ENCODE measurements at regions of chr6 and their contacts with region 1.

Region 1: DNA sequence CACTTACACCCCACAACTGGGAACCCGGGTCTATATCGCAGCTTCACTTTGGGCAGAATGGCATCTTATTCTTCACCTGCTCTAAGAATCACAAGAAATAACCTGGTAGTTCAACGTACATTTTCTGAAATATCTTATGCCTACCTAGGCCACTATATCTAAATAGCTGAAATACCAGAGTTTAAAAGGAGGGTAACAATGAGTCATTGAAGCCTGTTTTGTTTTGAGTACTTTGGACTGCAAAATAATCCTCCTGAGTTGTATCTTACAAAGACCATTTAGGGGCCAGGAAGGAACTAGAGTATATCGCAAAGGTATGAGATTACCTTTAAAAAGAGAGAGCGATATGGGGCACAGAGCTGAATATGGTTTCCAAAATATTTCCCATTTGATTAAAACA is 96.7 kb upstream of the NUP153 start:
- DNase-seq: no peak
- H3K4me3 ChIP-seq: no peak overlapping the region
- H3K27ac ChIP-seq: no peak overlapping the region
- H3K4me1 ChIP-seq: no peaks in the 10 kb centered on the region
- H3K27me3 ChIP-seq: no peaks in the 10 kb centered on the region
- CTCF ChIP-seq: no peak

Region 2: DNA sequence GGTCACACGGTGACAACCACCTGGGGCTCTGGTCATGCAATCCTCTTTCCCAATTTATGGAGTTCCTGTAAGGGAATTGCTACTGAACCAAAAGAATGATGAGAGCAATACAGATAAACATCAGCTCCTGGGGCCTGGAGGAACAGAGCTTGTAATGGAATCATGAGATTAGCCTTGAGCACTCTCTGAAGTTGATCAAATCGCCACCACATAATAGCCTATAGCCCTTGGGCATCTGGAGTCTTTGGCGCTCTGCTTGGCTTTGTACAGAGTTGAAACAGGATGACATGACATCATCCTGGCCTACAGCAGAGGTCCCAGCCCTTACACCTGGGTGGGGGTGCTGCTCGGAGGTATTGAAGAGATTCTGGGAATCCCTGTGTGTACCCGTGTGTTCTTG is 1986.3 kb before region 1 on chr6:
- CTCF ChIA-PET with region 1: no interaction called
- POLR2A ChIA-PET with region 1: no interaction called
- intact Hi-C with region 1: no loop called
- DNase-seq: no peak
- H3K4me3 ChIP-seq: no peak overlapping the region
- H3K27ac ChIP-seq: no peak overlapping the region
- H3K4me1 ChIP-seq: no peaks in the 10 kb centered on the region
- H3K27me3 ChIP-seq: no peaks in the 10 kb centered on the region
- CTCF ChIP-seq: no peak

Region 3: GRCh38 chr6:17145162-17145561 is 658.2 kb before region 1 on chr6:
- CTCF ChIA-PET with region 1: no interaction called
- POLR2A ChIA-PET with region 1: no interaction called
- intact Hi-C with region 1: no loop called
- DNase-seq: no peak
- H3K4me3 ChIP-seq: no peak overlapping the region
- H3K27ac ChIP-seq: no peak overlapping the region
- H3K4me1 ChIP-seq: no peaks in the 10 kb centered on the region
- H3K27me3 ChIP-seq: no peaks in the 10 kb centered on the region
- CTCF ChIP-seq: no peak

Region 4: GRCh38 chr6:17599885-17600526 is 203.4 kb before region 1 on chr6 and contains the start of gene FAM8A1:
- CTCF ChIA-PET with region 1: no interaction called
- POLR2A ChIA-PET with region 1: no interaction called
- intact Hi-C with region 1: loop called (anchors 5 kb)
- DNase-seq: peak; percentile 96
- H3K4me3 ChIP-seq: peak within 1 kb of the TSS; percentile 90
- H3K27ac ChIP-seq: peak within 1 kb of the TSS; percentile 88
- H3K4me1 ChIP-seq: peaks cover 14% of the 10 kb centered on the region
- H3K27me3 ChIP-seq: no peaks in the 10 kb centered on the region
- CTCF ChIP-seq: peak; percentile 45
- total RNA-seq, gene FAM8A1: 15.7 and 16.2 TPM in 2 replicates

Region 5: GRCh38 chr6:17666646-17667045 is 136.8 kb before region 1 on chr6:
- CTCF ChIA-PET with region 1: no interaction called
- POLR2A ChIA-PET with region 1: no interaction called
- intact Hi-C with region 1: no loop called
- DNase-seq: no peak
- H3K4me3 ChIP-seq: no peak overlapping the region
- H3K27ac ChIP-seq: no peak overlapping the region
- H3K4me1 ChIP-seq: no peaks in the 10 kb centered on the region
- H3K27me3 ChIP-seq: no peaks in the 10 kb centered on the region
- CTCF ChIP-seq: no peak